Cardiac septum (tissue), 1 donor: ENCODE measurements at regions of chr5 and their contacts with region 1.

Region 1: DNA sequence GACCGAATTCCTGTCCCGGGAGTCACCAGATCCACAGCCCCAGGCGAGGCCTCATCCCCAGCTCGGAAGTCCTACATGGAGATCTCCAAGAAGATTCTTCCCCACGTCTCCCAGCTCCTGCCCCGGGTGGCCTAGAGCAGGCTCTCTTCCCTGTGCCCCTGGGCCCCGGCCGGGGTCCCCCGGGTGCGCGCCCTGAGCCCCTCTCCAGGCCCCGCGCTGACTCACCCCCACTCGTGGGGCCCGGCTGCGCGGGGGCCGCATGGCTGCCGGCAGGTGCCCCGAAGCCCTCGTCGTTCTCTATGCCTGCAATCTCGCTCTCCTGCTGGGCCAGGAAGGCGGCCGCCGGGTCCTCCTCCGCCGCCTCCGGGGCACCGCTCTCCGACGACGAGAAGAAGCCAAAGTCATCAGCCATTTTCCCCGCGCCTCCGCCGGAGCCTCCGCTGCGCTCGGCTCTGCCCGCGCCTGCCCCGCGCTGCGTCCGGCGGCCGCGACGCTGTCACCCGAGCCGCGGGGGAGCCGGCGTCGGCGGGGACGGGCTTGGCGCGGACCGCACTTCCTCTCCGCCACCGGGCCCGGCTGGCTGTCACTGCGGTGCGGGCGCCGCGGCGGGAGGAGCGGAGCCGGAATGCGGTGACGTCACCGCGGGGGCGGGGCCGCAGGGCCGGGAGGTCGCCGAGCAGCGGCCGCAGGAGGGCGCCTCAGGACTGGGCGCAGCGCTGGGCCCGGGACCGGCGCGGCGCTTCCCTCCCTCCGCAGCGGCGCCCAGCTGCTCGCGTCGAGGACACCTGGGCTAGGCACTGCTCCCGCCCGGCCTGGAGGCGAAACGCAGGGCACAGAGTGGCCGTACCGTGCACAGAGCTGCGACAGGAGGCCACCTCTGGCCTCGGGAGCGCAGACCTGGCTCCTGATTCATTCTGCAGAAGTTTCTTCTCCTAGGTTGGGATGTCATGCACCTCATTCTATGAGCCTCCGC is at the start of gene CLTB:
- DNase-seq: peak; percentile 97
- total RNA-seq, gene CLTB: 252 TPM

Region 2: GRCh38 chr5:176361437-176362232 is 54.6 kb before region 1 on chr5 and contains the start of gene KIAA1191:
- intact Hi-C with region 1: loop called (anchors 1 kb)
- DNase-seq: peak; percentile 98
- total RNA-seq, gene KIAA1191: 104 TPM

Region 3: GRCh38 chr5:176447982-176448608 is 31.9 kb after region 1 on chr5 and contains the start of gene FAF2:
- intact Hi-C with region 1: loop called (anchors 1 kb)
- DNase-seq: peak; percentile 99
- total RNA-seq, gene FAF2: 15.9 TPM

Region 4: GRCh38 chr5:176537608-176538504 is 121.6 kb after region 1 on chr5:
- intact Hi-C with region 1: loop called (anchors 5 kb)
- DNase-seq: peak; percentile 99

Region 5: GRCh38 chr5:176647030-176647866 is 231.0 kb after region 1 on chr5 and contains the start of gene TSPAN17:
- intact Hi-C with region 1: loop called (anchors 5 kb)
- DNase-seq: peak; percentile 100
- total RNA-seq, gene TSPAN17: 30.2 TPM

Region 6: DNA sequence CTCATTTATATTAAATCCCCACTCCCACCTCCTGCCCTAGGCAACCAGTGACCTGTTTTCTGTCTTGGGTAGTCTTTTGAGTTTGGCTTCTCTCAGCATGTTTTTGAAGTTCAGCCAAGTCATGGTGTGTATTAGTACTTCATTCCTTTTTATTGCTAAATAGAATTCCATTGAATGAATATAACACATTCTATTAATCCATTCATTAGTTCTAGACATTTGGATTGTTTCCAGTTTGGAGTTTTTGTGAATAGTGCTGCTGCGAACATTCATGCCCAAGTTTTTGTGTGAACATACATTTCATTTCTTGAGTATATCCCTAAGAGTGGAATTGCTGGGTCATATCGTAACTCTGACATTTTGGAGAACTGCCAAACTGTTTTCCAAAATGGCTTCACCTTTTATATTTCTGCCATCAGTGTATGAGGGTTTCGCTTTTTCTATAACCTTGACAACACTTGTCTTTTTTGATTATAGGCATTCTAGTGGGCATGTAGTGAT is 608.9 kb after region 1 on chr5:
- intact Hi-C with region 1: no loop called
- DNase-seq: no peak